ENCODE measurements at regions of chr11 and their contacts with region 1.

Region 1: DNA sequence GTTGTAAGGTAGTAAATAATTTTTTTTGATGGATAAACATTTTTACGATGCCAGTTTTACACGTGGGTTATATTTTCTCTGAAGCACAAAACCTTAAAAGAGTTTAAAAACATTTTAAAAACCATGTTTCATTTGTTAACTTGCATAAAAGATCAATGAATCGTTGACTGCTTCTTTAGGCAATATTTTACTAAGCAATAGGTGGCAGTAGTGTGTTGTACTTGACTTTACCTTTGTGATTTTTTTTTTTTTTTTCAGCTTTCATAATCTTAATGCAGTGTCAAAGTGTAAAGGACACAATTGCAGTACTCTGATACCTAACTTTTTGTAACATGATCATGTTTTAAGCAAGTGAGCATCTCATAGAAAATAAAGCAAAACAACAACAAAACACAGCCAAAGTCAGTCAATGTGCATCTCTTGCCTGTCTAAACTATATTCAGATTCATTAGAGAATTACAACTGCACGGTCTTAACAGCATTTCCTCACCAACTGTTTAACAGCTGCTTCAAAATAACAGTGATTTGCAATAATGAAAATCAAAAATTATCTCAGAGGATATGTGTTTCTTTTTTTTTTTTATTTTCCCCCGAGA is 27.7 kb downstream of the DNAJC24 start:
- DNase-seq: peak in 4 of 5 donors; percentile 11 to 26 (median 20)
- H3K4me3 ChIP-seq: no peak overlapping the region
- H3K4me3 Mint-ChIP-seq: no peak overlapping the region
- H3K27ac ChIP-seq: no peak overlapping the region
- H3K27ac Mint-ChIP-seq: no peak overlapping the region
- H3K4me1 ChIP-seq: no peaks in the 10 kb centered on the region
- H3K4me1 Mint-ChIP-seq: peaks cover 0 to 14% (median 4%) of the 10 kb centered on the region in 4 donors
- H3K27me3 ChIP-seq: no peaks in the 10 kb centered on the region
- H3K27me3 Mint-ChIP-seq: no peaks in the 10 kb centered on the region

Region 2: GRCh38 chr11:31240338-31240904 is 156.9 kb before region 1 on chr11:
- CTCF ChIA-PET with region 1: no interaction called
- POLR2A ChIA-PET with region 1: no interaction called
- intact Hi-C with region 1: loop called (anchors 1 kb)
- DNase-seq: peak in 4 of 5 donors; percentile 7 to 29 (median 23)
- H3K4me3 ChIP-seq: no peak overlapping the region
- H3K4me3 Mint-ChIP-seq: no peak overlapping the region
- H3K27ac ChIP-seq: no peak overlapping the region
- H3K27ac Mint-ChIP-seq: no peak overlapping the region
- H3K4me1 ChIP-seq: no peaks in the 10 kb centered on the region
- H3K4me1 Mint-ChIP-seq: no peaks in the 10 kb centered on the region
- H3K27me3 ChIP-seq: no peaks in the 10 kb centered on the region
- H3K27me3 Mint-ChIP-seq: peaks cover 0 to 3% of the 10 kb centered on the region in 2 donors

Region 3: GRCh38 chr11:31303644-31304180 is 93.6 kb before region 1 on chr11:
- CTCF ChIA-PET with region 1: no interaction called
- POLR2A ChIA-PET with region 1: no interaction called
- intact Hi-C with region 1: no loop called
- DNase-seq: no peak
- H3K4me3 ChIP-seq: no peak overlapping the region
- H3K4me3 Mint-ChIP-seq: no peak overlapping the region
- H3K27ac ChIP-seq: no peak overlapping the region
- H3K27ac Mint-ChIP-seq: no peak overlapping the region
- H3K4me1 ChIP-seq: no peaks in the 10 kb centered on the region
- H3K4me1 Mint-ChIP-seq: no peaks in the 10 kb centered on the region
- H3K27me3 ChIP-seq: no peaks in the 10 kb centered on the region
- H3K27me3 Mint-ChIP-seq: no peaks in the 10 kb centered on the region

Region 4: DNA sequence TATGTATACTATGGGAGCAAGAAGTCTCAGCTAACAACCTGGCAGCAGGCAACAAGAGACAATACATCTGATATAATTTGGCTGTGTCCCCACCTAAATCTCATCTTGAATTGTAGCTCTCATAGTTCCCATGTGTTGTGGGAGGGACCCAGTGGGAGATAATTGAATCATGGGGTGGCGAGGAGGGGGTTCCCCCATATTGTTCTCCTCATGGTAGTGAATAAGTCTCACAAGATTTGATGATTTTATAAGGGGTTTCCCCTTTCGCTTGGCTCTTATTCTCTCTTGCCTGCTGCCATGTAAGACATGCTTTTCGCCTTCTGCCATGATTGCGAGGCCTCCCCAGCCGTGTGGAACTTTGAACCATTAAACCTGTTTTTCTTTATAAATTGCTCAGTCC is 21.5 kb before region 1 on chr11:
- CTCF ChIA-PET with region 1: no interaction called
- POLR2A ChIA-PET with region 1: no interaction called
- intact Hi-C with region 1: no loop called
- DNase-seq: no peak
- H3K4me3 ChIP-seq: no peak overlapping the region
- H3K4me3 Mint-ChIP-seq: peak overlapping the region in 3 of 8 donors; percentile 1 to 51 (median 7)
- H3K27ac ChIP-seq: no peak overlapping the region
- H3K27ac Mint-ChIP-seq: peak overlapping the region in 1 of 7 donors; percentile 68
- H3K4me1 ChIP-seq: peaks cover 11% of the 10 kb centered on the region
- H3K4me1 Mint-ChIP-seq: peaks cover 23 to 34% (median 26%) of the 10 kb centered on the region in 4 donors
- H3K27me3 ChIP-seq: no peaks in the 10 kb centered on the region
- H3K27me3 Mint-ChIP-seq: no peaks in the 10 kb centered on the region

Region 5: GRCh38 chr11:31542862-31543261 is 145.5 kb after region 1 on chr11:
- CTCF ChIA-PET with region 1: no interaction called
- POLR2A ChIA-PET with region 1: no interaction called
- intact Hi-C with region 1: no loop called
- DNase-seq: no peak
- H3K4me3 ChIP-seq: no peak overlapping the region
- H3K4me3 Mint-ChIP-seq: no peak overlapping the region
- H3K27ac ChIP-seq: no peak overlapping the region
- H3K27ac Mint-ChIP-seq: no peak overlapping the region
- H3K4me1 ChIP-seq: no peaks in the 10 kb centered on the region
- H3K4me1 Mint-ChIP-seq: no peaks in the 10 kb centered on the region
- H3K27me3 ChIP-seq: no peaks in the 10 kb centered on the region
- H3K27me3 Mint-ChIP-seq: no peaks in the 10 kb centered on the region

Region 6: DNA sequence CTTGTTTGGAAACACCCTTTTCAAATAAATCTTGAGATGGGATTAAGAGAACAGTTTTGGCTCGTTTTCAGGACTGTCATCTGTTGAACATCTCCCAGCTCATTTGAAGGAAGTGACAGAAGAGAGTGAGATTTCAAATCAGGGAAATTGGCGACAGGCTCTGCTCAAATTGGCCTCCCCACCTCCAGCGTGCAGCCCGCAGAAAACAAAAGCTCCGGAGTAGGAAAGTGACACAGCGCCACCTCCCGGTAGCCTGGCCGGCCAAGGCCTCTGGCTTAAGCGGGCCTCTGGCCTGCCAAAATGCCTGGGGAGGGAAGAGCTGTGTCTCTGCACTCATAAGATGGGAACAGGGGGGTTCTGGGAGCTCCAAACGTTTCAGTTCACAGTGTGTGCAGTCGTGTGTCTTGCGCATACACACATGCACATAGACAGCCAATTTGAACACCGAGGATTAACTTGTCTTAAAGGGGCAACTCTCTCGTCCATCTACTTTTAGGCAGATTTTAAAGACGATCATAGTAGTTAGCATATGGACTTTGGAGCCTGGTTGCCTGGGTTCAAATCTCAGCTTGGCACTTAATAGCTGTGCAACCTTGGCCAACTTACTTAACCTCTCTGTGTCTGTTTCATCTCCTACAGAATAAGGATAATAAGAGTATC is 560.9 kb after region 1 on chr11:
- CTCF ChIA-PET with region 1: interaction called, 14 read pairs
- POLR2A ChIA-PET with region 1: no interaction called
- intact Hi-C with region 1: no loop called
- DNase-seq: peak in 4 of 5 donors; percentile 33 to 40 (median 37)
- H3K4me3 ChIP-seq: no peak overlapping the region
- H3K4me3 Mint-ChIP-seq: peak overlapping the region in 1 of 8 donors; percentile 37
- H3K27ac ChIP-seq: no peak overlapping the region
- H3K27ac Mint-ChIP-seq: no peak overlapping the region
- H3K4me1 ChIP-seq: no peaks in the 10 kb centered on the region
- H3K4me1 Mint-ChIP-seq: peaks cover 0 to 4% (median 0%) of the 10 kb centered on the region in 4 donors
- H3K27me3 ChIP-seq: no peaks in the 10 kb centered on the region
- H3K27me3 Mint-ChIP-seq: peaks cover 0 to 4% of the 10 kb centered on the region in 2 donors

Region 7: DNA sequence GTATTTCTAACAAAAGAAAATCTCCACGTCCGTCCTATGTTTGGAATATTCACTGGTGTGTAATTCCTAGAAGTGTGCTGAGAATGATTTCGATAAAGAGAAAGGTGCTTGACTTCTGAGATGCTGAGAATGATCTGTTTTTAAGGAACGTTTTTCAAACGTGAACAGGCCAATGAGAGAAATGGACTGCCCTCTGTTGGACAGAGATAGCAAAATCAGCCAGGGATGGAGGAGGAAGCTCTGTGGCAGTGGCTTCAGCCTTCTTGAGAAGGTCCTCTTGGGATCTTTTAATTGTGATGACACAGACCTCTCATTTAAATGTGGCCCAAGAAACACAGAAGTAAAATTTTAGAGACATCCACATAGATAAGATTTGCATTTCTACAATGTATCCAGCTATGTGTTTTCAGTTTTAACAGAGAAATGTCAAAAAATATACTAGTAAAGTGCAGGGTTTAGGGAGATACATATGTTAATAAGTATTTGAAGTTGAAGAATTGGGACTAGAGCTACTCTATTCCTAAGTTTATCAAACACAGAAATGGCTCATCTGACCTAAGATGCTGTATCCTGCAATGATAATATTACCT is 609.6 kb after region 1 on chr11:
- CTCF ChIA-PET with region 1: no interaction called
- POLR2A ChIA-PET with region 1: no interaction called
- intact Hi-C with region 1: loop called (anchors 2 kb)
- DNase-seq: peak in 4 of 5 donors; percentile 7 to 31 (median 26)
- H3K4me3 ChIP-seq: no peak overlapping the region
- H3K4me3 Mint-ChIP-seq: peak overlapping the region in 1 of 8 donors; percentile 15
- H3K27ac ChIP-seq: no peak overlapping the region
- H3K27ac Mint-ChIP-seq: no peak overlapping the region
- H3K4me1 ChIP-seq: no peaks in the 10 kb centered on the region
- H3K4me1 Mint-ChIP-seq: peaks cover 0 to 3% (median under 1%) of the 10 kb centered on the region in 4 donors
- H3K27me3 ChIP-seq: peaks cover 3% of the 10 kb centered on the region
- H3K27me3 Mint-ChIP-seq: peaks cover 19 to 37% of the 10 kb centered on the region in 2 donors

Region 8: GRCh38 chr11:32052218-32052617 is 654.9 kb after region 1 on chr11:
- CTCF ChIA-PET with region 1: no interaction called
- POLR2A ChIA-PET with region 1: no interaction called
- intact Hi-C with region 1: loop called (anchors 5 kb)
- DNase-seq: peak; percentile 25 to 48 (median 41)
- H3K4me3 ChIP-seq: no peak overlapping the region
- H3K4me3 Mint-ChIP-seq: no peak overlapping the region
- H3K27ac ChIP-seq: no peak overlapping the region
- H3K27ac Mint-ChIP-seq: no peak overlapping the region
- H3K4me1 ChIP-seq: no peaks in the 10 kb centered on the region
- H3K4me1 Mint-ChIP-seq: no peaks in the 10 kb centered on the region
- H3K27me3 ChIP-seq: no peaks in the 10 kb centered on the region
- H3K27me3 Mint-ChIP-seq: peaks cover 17 to 26% of the 10 kb centered on the region in 2 donors

Measured in CD4-positive, alpha-beta memory T cell (primary cell).